ENCODE measurements at regions of chr3 and their contacts with region 1.

Region 1: DNA sequence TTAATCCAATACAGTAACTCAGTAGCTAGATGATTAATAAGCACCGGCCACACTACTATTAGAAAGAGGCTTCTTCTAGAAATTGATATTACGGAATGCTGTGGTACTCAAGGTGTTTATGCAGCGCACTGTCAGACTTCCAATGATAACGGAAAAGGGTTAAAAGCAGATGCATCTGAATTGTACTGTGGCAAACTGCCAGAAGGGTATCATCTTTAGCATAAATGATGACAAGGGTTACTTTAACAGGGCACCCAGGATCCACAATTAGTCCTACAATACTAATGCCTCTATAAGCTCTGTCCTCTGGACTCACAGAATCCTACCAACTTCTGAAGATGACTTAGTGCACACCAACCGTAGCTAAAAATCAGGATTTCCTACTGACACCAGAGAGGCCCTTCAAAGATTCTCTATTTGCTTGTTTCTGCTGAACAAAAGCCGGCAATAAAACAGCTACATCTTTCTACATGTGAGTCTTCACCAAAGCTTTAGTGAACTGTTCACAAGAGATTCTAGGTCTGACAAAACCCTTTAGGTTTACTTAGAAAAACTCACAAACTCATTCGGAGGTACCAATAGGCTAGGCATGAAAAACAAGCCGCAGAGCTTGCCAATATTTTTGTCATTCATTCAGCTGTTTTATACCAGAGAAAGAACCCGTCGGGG is 7.1 kb downstream of the SATB1 start:
- DNase-seq: no peak
- H3K4me3 ChIP-seq: no peak overlapping the region
- H3K4me3 Mint-ChIP-seq: peak overlapping the region; percentile 6 to 80 (median 64)
- H3K27ac ChIP-seq: no peak overlapping the region
- H3K27ac Mint-ChIP-seq: peak overlapping the region in 6 of 7 donors; percentile 48 to 82 (median 68)
- H3K4me1 ChIP-seq: peaks cover 74% of the 10 kb centered on the region
- H3K4me1 Mint-ChIP-seq: peaks cover 46 to 87% (median 74%) of the 10 kb centered on the region in 4 donors
- H3K27me3 ChIP-seq: no peaks in the 10 kb centered on the region
- H3K27me3 Mint-ChIP-seq: no peaks in the 10 kb centered on the region

Region 2: DNA sequence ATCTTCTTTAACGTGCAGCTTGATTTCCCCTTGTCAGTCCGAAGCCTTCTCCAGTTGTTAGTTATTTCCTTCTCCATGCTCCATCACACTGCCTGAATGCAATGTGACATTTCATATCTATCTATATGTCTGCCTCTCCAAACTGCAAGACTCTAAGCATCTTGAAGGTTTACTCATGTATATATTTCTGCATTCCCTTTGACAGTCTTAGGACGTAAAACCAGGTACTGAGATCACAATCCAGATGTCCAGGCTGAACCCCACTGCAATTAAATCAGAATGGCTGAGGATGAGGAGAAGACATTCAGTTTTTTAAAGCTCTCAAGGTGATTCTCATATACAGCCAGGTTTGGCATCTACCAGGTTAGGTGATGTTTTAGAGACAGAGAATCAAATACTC is 13.2 kb after region 1 on chr3:
- CTCF ChIA-PET with region 1: interaction called, 3 read pairs
- POLR2A ChIA-PET with region 1: interaction called, 10 read pairs
- intact Hi-C with region 1: no loop called
- DNase-seq: no peak
- H3K4me3 ChIP-seq: peak overlapping the region in 1 of 2 donors; percentile 8
- H3K4me3 Mint-ChIP-seq: peak overlapping the region; percentile 75 to 87 (median 84)
- H3K27ac ChIP-seq: peak overlapping the region; percentile 53
- H3K27ac Mint-ChIP-seq: peak overlapping the region; percentile 37 to 94 (median 77)
- H3K4me1 ChIP-seq: peaks cover 93% of the 10 kb centered on the region
- H3K4me1 Mint-ChIP-seq: peaks cover 59 to 86% (median 71%) of the 10 kb centered on the region in 4 donors
- H3K27me3 ChIP-seq: no peaks in the 10 kb centered on the region
- H3K27me3 Mint-ChIP-seq: no peaks in the 10 kb centered on the region